AG04449 (cell line): ENCODE measurements at regions of chr7 and their contacts with region 1.

Region 1: DNA sequence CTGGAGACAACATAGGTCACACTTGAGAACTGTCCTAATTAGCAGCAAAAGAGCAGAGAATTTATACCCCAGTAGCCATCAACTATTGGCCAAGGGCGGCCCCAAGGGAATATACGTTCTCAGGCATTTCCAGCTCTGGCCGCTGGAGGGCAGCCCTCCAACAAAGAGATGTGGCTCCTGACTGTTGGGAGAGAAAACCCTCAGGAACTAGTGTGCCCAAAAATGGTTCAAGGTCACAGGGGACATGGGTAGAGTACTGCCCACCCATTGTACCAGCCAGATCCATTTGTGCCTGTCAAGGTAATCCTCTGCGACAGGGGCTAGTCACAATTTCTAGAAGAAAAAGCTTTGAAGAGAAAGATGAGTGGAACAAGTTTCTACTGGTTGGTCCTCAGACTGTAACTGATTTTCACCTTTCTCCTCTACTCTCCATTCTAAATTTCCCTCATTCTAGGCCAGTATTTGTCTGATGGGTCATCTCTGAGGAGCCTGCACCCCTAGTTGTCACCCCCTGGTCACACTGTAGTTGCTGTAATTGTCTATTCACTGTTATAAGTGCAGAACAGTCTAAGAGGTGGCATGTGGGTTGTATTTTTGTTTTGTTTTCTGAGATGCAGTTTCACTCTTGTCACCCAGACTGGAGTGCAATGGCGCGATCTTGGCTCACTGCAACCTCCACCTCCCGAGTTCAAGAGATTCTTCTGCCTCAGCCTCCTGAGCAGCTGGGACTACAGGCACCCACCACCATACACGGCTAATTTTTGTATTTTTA is 14.7 kb upstream of the C7orf33 start:
- DNase-seq: peak; percentile 4
- H3K4me3 ChIP-seq: no peak overlapping the region
- CTCF ChIP-seq: peak; percentile 84

Region 2: DNA sequence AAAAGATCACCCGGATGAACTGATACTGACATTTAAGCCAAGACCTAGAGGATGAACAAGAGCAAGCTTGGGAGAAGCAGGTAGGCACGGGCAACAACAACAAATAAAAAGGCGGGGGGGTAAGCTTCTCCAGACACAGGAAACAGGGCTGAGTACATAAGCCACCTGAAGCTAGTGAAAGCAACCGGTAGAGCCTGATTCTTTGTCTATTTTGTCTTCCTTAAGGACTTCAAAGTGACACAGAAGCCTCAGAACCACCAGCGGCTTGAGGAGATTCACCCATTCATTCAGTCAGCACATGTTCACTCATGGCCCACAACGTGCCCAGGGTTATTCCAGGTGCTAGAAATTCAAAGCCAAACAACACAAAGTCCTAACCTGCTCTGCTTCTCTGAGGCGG is 54.6 kb before region 1 on chr7:
- CTCF ChIA-PET with region 1: no interaction called
- POLR2A ChIA-PET with region 1: no interaction called
- DNase-seq: no peak
- H3K4me3 ChIP-seq: no peak overlapping the region
- CTCF ChIP-seq: no peak

Region 3: DNA sequence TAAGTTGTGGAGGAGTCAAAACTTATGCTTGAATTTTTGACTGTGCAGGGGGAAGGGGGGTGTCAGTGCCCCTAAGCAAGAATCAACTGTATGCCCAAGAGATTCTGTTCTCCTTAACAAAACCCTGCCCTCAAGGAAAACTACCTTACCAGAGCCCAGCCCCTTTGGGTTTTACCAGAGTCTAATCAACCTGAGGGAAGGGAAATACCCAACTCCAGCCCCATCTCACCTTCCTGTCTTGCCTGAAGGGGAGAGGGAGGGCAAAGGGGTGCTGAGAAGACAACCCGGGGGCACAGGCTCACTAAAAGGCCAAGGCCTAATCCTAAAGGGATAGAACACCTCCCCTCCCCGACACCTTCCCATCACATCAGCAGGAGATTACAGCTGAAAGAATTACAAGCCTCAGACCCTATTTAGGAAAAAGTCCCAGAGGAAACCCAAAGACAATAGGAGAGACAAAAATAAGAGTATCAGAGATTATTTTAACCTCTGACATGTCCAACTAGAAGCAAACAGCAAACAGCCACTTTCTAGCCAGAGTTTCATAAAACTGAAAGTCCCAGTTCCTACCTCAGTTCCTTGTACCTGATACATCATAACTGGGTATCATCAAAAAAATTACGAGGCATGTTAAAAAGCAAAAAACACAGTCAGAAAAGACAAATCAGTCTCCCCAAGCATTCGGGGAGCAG is 12.1 kb before region 1 on chr7:
- CTCF ChIA-PET with region 1: interaction called, 11 read pairs
- POLR2A ChIA-PET with region 1: no interaction called
- DNase-seq: no peak
- H3K4me3 ChIP-seq: no peak overlapping the region
- CTCF ChIP-seq: no peak

Region 4: DNA sequence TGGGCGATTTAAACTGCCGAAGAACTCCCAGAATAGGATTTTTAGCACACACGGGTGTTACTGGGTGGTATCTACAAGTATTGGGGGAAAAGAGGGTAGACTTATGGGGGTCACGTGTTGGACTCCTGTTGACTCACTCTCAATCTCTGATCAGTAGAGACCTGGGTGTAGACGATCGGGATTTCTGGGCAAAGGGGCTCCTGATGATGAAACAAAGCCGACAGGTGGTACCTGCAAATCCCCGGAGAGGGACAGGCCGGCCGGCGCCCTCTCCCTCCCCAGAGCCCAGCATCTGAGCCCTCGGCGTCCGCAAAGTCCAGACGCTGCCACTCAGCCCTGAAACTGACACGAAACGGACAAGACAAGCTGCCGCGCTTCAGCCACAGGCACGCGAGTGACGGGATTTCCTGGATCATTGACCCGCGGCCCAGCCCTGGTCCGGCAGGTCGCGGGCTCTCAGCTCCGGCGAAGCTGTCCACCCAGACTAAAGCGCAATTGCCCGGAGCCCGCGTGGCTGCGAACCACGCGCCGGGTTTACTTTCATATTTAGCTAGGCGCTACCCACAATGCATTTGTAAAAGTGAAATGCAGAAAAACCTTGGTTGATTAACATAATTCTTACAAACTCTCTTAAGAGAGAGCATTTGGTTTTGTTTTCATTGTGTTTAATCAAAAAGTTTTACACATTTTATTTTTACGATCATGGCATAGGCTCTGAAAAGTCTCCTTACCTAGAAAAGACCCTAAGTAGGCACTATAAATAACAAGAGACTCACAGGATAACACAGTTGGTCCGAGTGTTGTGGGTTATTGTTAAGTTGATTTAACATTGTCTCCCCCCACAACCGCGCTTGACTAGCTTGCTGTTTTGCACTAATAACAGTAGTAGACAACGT is 365.1 kb after region 1 on chr7:
- CTCF ChIA-PET with region 1: interaction called, 17 read pairs
- POLR2A ChIA-PET with region 1: no interaction called
- DNase-seq: peak; percentile 69
- H3K4me3 ChIP-seq: peak overlapping the region; percentile 84
- CTCF ChIP-seq: no peak